ENCODE measurements at regions of chr2 and their contacts with region 1.

Region 1: DNA sequence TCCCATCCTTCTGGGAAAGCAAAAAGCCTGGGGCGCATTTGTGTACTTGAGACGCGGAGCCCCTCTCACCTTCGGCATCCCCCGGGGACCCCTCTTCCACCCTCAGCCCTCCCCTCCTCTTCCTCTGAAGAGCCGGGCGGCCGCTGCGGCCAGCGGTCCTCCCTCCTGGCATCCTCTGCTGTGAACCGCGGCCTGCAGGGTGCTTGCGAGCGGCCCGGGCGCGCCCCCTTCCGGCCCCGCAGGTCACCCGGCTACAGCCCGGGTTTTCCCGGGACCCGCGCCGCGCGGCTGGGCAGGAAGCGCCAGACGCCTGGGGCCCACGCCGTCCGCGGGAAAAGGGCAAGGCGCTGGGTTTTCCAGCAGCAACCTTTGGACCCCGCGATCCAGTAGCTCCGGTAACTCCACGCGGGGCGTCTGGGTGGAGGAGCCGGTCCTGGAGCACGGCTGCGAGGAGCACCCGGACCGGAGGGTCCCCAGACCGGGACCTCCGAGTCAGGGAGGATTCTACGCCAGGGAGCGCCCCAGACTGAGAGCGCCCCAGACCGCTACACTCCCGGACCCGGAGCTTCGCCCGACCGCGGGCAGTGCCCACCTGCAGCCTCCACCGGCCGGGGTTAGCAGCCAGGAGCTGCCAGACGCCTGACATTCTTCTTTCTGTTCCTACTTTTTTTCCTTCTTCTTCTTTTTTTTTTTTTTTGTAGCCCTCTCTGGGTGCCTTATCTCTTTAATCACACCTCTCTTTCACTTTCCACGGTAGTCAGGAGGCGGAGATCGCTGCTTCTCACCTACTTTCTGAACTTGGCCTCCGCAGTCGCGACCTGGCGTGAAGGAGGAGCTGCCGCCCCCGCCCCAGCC is at the start of gene IL18R1:
- DNase-seq: peak; percentile 29
- H3K4me3 ChIP-seq: peak within 1 kb of the TSS; percentile 76
- H3K27ac ChIP-seq: no peak within 1 kb of the TSS
- H3K27me3 ChIP-seq: no peaks in the 10 kb centered on the region
- CTCF ChIP-seq: peak; percentile 70
- polyA plus RNA-seq, gene IL18R1: 2.0 and 2.5 TPM in 2 replicates

Region 2: DNA sequence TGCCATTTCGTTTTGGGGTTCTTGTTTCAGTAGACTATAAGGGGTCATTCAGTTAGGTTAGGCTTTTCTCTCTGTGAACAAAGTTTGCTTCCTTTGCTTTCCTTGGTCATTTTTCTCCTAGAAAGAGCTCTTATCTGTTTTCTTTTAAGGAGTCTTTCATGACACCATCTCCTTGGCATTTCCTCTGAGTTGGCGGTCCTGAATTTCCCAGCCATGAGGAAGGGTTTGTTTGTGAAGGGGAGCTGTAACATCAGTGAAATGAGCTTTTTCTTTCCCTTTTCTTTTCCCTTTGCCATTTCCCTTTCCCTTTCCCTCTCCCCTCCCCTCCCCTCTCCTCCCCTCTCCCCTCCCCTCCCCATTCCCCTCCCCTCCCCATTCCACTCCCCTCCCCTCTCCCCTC is 596.6 kb before region 1 on chr2:
- CTCF ChIA-PET with region 1: no interaction called
- POLR2A ChIA-PET with region 1: no interaction called
- DNase-seq: peak; percentile 82
- H3K4me3 ChIP-seq: no peak overlapping the region
- H3K27ac ChIP-seq: peak overlapping the region; percentile 80
- H3K27me3 ChIP-seq: no peaks in the 10 kb centered on the region
- CTCF ChIP-seq: no peak

Region 3: GRCh38 chr2:102251042-102251848 is 104.5 kb before region 1 on chr2:
- CTCF ChIA-PET with region 1: interaction called, 28 read pairs
- POLR2A ChIA-PET with region 1: no interaction called
- DNase-seq: no peak
- H3K4me3 ChIP-seq: peak overlapping the region; percentile 46
- H3K27ac ChIP-seq: no peak overlapping the region
- H3K27me3 ChIP-seq: no peaks in the 10 kb centered on the region
- CTCF ChIP-seq: peak; percentile 50

Region 4: DNA sequence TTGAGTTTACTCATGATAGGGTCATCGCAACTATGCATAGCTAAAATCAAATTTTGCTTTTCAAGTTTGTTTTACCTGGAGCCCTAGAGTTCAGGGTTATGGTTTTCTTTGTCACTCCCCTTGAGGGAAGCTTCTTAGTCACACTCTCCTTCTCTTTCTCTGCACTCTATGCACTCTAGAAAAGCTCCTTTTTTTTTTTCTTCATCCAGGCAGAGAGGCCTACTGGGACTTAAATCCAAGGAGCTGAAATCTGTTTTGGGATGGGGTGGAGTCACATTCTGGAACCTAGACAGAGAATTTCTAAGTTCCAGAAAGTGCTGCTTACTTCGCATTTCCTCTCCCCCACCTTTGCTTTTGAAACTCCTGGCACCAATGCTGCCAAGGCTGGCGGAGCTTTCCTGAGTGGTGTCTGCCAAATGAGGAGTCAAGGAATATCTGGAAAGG is 19.2 kb before region 1 on chr2:
- CTCF ChIA-PET with region 1: interaction called, 10 read pairs
- POLR2A ChIA-PET with region 1: no interaction called
- DNase-seq: no peak
- H3K4me3 ChIP-seq: no peak overlapping the region
- H3K27ac ChIP-seq: no peak overlapping the region
- H3K27me3 ChIP-seq: no peaks in the 10 kb centered on the region
- CTCF ChIP-seq: no peak

Region 5: DNA sequence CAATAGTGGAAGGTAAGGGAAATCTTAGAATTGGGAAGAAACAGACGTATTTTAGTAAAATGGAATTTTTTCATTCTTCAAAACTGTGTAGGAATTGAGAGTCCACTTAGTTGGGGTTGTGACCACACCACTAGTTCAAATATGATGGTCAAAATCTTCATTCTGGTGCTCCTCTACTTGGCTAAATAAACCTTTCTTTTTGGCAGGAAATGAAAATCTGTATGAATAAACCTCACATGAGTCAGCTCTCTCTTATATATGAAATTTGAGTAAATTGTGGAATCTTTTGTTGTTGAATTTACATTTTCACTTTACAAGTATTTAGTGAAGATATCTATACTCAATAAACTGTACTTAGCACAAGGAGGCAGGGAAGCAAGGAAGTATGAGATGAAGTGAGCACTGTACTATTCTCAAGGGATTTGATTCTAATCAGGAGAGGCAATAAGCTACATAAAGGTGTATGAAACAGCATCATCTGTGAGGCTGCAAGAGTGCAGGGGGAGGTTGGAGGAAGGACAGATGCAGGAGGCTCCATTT is 20.4 kb after region 1 on chr2:
- CTCF ChIA-PET with region 1: interaction called, 10 read pairs
- POLR2A ChIA-PET with region 1: no interaction called
- DNase-seq: no peak
- H3K4me3 ChIP-seq: no peak overlapping the region
- H3K27ac ChIP-seq: peak overlapping the region; percentile 24
- H3K27me3 ChIP-seq: no peaks in the 10 kb centered on the region
- CTCF ChIP-seq: no peak